ENCODE measurements at regions of chr10 and their contacts with region 1.

Region 1: GRCh38 chr10:69408318-69409175 is 8.2 kb downstream of the TACR2 start:
- DNase-seq: peak; percentile 79 to 97 (median 87)
- ATAC-seq: peak; percentile 92
- H3K4me3 ChIP-seq: peak overlapping the region; percentile 32
- H3K4me3 Mint-ChIP-seq: peak overlapping the region; percentile 64
- H3K27ac ChIP-seq: peak overlapping the region; percentile 72 to 82
- H3K27ac Mint-ChIP-seq: peak overlapping the region; percentile 88
- H3K4me1 ChIP-seq: peaks cover 26% of the 10 kb centered on the region
- H3K4me1 Mint-ChIP-seq: peaks cover 28% of the 10 kb centered on the region
- H3K27me3 ChIP-seq: no peaks in the 10 kb centered on the region
- H3K27me3 Mint-ChIP-seq: no peaks in the 10 kb centered on the region
- CTCF ChIP-seq: peak; percentile 73

Region 2: GRCh38 chr10:69123747-69124562 is 284.6 kb before region 1 on chr10 and contains the start of gene VPS26A:
- CTCF ChIA-PET with region 1: no interaction called
- POLR2A ChIA-PET with region 1: no interaction called
- intact Hi-C with region 1: loop called in 1 of 2 experiments (anchors 5 kb)
- DNase-seq: peak; percentile 97 to 99 (median 98)
- ATAC-seq: peak; percentile 94
- H3K4me3 ChIP-seq: peak within 1 kb of the TSS; percentile 90
- H3K4me3 Mint-ChIP-seq: peak within 1 kb of the TSS; percentile 97
- H3K27ac ChIP-seq: peak within 1 kb of the TSS; percentile 92 to 95
- H3K27ac Mint-ChIP-seq: peak within 1 kb of the TSS; percentile 98
- H3K4me1 ChIP-seq: peaks cover 35% of the 10 kb centered on the region
- H3K4me1 Mint-ChIP-seq: peaks cover 27% of the 10 kb centered on the region
- H3K27me3 ChIP-seq: no peaks in the 10 kb centered on the region
- H3K27me3 Mint-ChIP-seq: no peaks in the 10 kb centered on the region
- CTCF ChIP-seq: peak; percentile 48
- total RNA-seq, gene VPS26A: 32.8 to 33.0 TPM

Region 3: DNA sequence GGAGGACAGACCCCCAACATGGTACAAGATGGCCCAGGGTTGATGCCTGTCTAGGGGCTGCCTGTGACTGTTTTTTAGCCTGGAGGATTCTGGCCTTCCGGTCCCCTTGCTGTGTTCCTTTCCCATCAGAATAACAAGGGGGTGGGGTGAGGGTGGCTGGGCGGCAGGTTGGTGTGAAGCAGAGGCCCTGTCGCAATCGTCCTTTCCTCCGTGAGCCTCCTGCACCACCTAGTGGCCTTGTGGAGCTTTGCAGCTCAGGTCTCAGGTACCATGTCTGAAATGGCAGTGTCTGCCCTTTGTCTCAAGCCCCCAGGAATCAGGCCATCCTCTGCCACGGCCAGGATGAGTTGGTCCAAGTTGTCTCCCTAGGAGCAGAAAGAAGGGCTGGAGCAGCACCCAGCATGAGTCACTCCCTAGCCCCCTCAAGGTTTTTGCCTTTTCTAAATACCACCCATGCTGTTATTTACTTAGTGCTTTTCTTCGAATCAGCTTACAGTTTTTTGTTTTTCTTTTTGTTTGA is 16.0 kb before region 1 on chr10:
- CTCF ChIA-PET with region 1: interaction called, 11 read pairs
- POLR2A ChIA-PET with region 1: interaction called, 11 read pairs
- intact Hi-C with region 1: no loop called
- DNase-seq: peak; percentile 73 to 91 (median 78)
- ATAC-seq: peak; percentile 100
- H3K4me3 ChIP-seq: no peak overlapping the region
- H3K4me3 Mint-ChIP-seq: no peak overlapping the region
- H3K27ac ChIP-seq: no peak overlapping the region
- H3K27ac Mint-ChIP-seq: peak overlapping the region; percentile 64
- H3K4me1 ChIP-seq: peaks cover 14% of the 10 kb centered on the region
- H3K4me1 Mint-ChIP-seq: peaks cover 25% of the 10 kb centered on the region
- H3K27me3 ChIP-seq: no peaks in the 10 kb centered on the region
- H3K27me3 Mint-ChIP-seq: no peaks in the 10 kb centered on the region
- CTCF ChIP-seq: peak; percentile 83

Region 4: GRCh38 chr10:69451209-69451783 is 42.7 kb after region 1 on chr10 and contains the start of gene TSPAN15:
- CTCF ChIA-PET with region 1: interaction called, 10 read pairs
- POLR2A ChIA-PET with region 1: interaction called, 4 read pairs
- intact Hi-C with region 1: no loop called
- DNase-seq: peak; percentile 61 to 90 (median 79)
- ATAC-seq: peak; percentile 96
- H3K4me3 ChIP-seq: peak within 1 kb of the TSS; percentile 84
- H3K4me3 Mint-ChIP-seq: peak within 1 kb of the TSS; percentile 92
- H3K27ac ChIP-seq: no peak within 1 kb of the TSS
- H3K27ac Mint-ChIP-seq: peak within 1 kb of the TSS; percentile 34
- H3K4me1 ChIP-seq: peaks cover 33% of the 10 kb centered on the region
- H3K4me1 Mint-ChIP-seq: peaks cover 27% of the 10 kb centered on the region
- H3K27me3 ChIP-seq: no peaks in the 10 kb centered on the region
- H3K27me3 Mint-ChIP-seq: no peaks in the 10 kb centered on the region
- CTCF ChIP-seq: no peak
- total RNA-seq, gene TSPAN15: 2.2 to 2.5 TPM

Region 5: GRCh38 chr10:69629897-69630650 is 221.5 kb after region 1 on chr10 and contains the start of gene FAM241B:
- CTCF ChIA-PET with region 1: interaction called, 3 read pairs
- POLR2A ChIA-PET with region 1: no interaction called
- intact Hi-C with region 1: loop called (anchors 2 to 5 kb)
- DNase-seq: peak; percentile 60 to 89 (median 72)
- ATAC-seq: peak; percentile 97
- H3K4me3 ChIP-seq: peak within 1 kb of the TSS; percentile 58
- H3K4me3 Mint-ChIP-seq: peak within 1 kb of the TSS; percentile 87
- H3K27ac ChIP-seq: peak within 1 kb of the TSS in 1 of 2 donors; percentile 25
- H3K27ac Mint-ChIP-seq: peak within 1 kb of the TSS; percentile 67
- H3K4me1 ChIP-seq: peaks cover 23% of the 10 kb centered on the region
- H3K4me1 Mint-ChIP-seq: peaks cover 19% of the 10 kb centered on the region
- H3K27me3 ChIP-seq: no peaks in the 10 kb centered on the region
- H3K27me3 Mint-ChIP-seq: no peaks in the 10 kb centered on the region
- CTCF ChIP-seq: peak; percentile 100
- total RNA-seq, gene FAM241B: 14.1 to 17.5 TPM

Measured in CD4-positive, alpha-beta T cell (primary cell).